Calu3 (cell line): ENCODE measurements at regions of chr20 and their contacts with region 1.

Region 1: GRCh38 chr20:10352934-10353866 is 80.8 kb downstream of the MKKS start:
- DNase-seq: peak; percentile 32
- H3K4me3 Mint-ChIP-seq: peak overlapping the region; percentile 37
- H3K27ac Mint-ChIP-seq: peak overlapping the region; percentile 89
- H3K4me1 Mint-ChIP-seq: peaks cover 37% of the 10 kb centered on the region
- H3K27me3 Mint-ChIP-seq: no peaks in the 10 kb centered on the region
- CTCF ChIP-seq: no peak

Region 2: DNA sequence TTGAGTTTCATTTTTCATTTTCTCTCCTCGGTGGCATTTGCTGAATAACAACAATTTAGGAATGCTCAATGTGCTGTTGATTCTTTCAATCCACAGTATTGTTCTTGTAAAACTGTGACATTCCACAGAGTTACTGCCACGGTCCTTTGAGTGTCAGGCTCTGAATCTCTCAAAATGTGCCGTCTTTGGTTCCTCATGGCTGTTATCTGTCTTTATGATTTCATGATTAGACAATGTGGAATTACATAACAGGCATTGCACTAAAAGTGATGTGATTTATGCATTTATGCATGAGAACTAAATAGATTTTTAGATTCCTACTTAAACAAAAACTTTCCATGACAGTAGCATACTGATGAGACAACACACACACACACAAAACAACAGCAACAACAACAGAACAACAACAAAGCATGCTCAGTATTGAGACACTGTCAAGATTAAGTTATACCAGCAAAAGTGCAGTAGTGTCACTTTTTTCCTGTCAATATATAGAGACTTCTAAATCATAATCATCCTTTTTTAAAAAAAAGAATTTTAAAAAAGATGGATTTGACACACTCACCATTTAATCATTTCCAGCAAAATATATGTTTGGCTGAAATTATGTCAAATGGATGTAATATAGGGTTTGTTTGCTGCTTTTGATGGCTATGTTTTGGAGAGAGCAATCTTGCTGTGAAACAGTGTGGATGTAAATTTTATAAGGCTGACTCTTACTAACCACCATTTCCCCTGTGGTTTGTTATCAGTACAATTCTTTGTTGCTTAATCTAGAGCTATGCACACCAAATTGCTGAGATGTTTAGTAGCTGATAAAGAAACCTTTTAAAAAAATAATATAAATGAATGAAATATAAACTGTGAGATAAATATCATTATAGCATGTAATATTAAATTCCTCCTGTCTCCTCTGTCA is 46.5 kb before region 1 on chr20:
- CTCF ChIA-PET with region 1: interaction called, 3 read pairs
- intact Hi-C with region 1: loop called (anchors 2 kb)
- DNase-seq: no peak
- H3K4me3 Mint-ChIP-seq: no peak overlapping the region
- H3K27ac Mint-ChIP-seq: no peak overlapping the region
- H3K4me1 Mint-ChIP-seq: peaks cover 32% of the 10 kb centered on the region
- H3K27me3 Mint-ChIP-seq: no peaks in the 10 kb centered on the region
- CTCF ChIP-seq: no peak

Region 3: DNA sequence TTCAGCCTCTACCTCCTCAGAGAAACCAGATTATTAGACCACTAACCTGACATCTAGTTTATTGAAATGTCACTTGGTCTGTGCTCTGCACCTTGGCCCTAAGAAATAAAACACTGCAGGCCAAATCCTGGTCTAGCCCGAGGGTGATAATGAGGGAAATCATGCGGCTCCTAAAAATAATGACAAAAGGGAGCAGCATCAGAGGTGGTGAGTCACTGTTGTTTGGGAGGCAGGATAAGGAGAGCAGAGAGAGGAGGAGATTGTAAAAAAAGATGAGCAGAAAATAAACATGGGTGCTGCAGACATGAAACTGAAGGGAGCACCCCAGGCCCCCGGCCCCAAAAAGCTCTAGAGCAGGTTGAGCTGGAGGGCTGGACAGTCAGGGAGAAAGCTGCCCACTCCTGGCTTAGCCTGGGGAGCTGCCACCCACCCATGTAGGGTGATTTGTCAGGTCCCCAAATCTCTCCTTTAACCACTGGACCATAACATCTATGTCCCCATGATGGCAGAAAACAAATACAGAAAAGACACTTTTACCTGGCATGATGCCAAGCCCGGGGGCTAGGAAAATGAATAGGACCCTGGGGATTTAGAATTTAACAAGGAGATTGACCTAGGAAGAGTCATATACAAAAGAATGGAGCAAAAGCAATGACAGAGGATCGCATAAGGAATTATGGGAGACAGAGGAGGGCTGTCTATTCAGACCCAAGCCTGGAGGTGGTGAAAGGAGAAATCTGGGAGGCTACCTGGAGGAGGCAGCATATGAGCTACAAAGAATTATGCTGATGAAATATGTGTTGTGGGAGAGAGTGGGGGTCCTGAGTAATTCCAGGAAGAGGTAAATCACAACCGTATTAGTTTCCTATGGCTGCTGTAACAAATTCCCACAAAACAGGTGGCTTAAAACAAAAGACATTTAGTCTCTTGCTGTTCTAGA is 30.9 kb before region 1 on chr20:
- CTCF ChIA-PET with region 1: no interaction called
- intact Hi-C with region 1: no loop called
- DNase-seq: no peak
- H3K4me3 Mint-ChIP-seq: no peak overlapping the region
- H3K27ac Mint-ChIP-seq: no peak overlapping the region
- H3K4me1 Mint-ChIP-seq: peaks cover 11% of the 10 kb centered on the region
- H3K27me3 Mint-ChIP-seq: peaks cover 16% of the 10 kb centered on the region
- CTCF ChIP-seq: no peak

Region 4: DNA sequence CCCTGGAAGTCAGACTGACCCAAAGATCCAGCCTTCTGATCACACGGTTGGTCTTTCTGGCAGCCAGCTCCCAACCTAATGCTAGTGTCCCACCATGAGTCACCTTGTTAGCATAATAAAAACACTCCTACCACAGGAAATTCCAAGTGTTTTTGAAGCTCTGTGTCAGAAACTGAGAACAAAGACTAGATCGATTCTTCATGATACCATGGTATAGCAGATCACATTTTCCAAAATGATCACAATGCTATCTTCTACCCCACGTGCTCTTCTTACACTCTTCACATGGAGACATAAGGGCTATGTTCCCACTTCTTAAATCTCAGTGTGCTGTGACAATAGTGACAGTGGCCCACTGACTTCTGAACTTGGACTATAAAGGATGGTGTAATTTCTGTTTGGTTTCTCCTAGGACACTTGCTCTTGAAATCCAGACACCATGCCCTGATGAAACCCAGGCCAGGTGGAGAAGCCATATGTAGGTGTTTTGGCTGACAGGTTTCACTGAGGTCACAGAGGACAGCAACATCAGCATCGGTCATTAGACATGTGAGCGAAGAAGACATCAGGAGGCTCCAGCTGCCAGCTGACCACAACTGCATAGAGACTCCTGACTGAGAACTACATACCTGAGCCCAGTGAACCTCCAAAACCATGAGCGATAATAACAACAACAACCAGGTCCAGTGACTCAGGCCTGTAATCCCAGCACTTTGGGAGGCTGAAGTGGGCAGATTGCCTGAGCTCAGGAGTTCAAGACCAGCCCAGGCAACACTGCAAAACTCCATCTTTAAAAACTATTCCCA is 23.3 kb after region 1 on chr20:
- CTCF ChIA-PET with region 1: no interaction called
- intact Hi-C with region 1: no loop called
- DNase-seq: no peak
- H3K4me3 Mint-ChIP-seq: no peak overlapping the region
- H3K27ac Mint-ChIP-seq: no peak overlapping the region
- H3K4me1 Mint-ChIP-seq: peaks cover 17% of the 10 kb centered on the region
- H3K27me3 Mint-ChIP-seq: no peaks in the 10 kb centered on the region
- CTCF ChIP-seq: no peak

Region 5: GRCh38 chr20:10419550-10420133 is 66.4 kb after region 1 on chr20:
- CTCF ChIA-PET with region 1: interaction called, 4 read pairs
- intact Hi-C with region 1: loop called (anchors 5 kb)
- DNase-seq: peak; percentile 20
- H3K4me3 Mint-ChIP-seq: no peak overlapping the region
- H3K27ac Mint-ChIP-seq: peak overlapping the region; percentile 72
- H3K4me1 Mint-ChIP-seq: peaks cover 42% of the 10 kb centered on the region
- H3K27me3 Mint-ChIP-seq: no peaks in the 10 kb centered on the region
- CTCF ChIP-seq: no peak

Region 6: GRCh38 chr20:10565191-10565921 is 212.2 kb after region 1 on chr20:
- CTCF ChIA-PET with region 1: no interaction called
- intact Hi-C with region 1: no loop called
- DNase-seq: no peak
- H3K4me3 Mint-ChIP-seq: no peak overlapping the region
- H3K27ac Mint-ChIP-seq: no peak overlapping the region
- H3K4me1 Mint-ChIP-seq: no peaks in the 10 kb centered on the region
- H3K27me3 Mint-ChIP-seq: no peaks in the 10 kb centered on the region
- CTCF ChIP-seq: no peak